Right ventricle myocardium superior (tissue), 1 donor: ENCODE measurements at regions of chr3 and their contacts with region 1.

Region 1: GRCh38 chr3:87167628-87168456 is 59.3 kb upstream of the CHMP2B start:
- DNase-seq: no peak
- ATAC-seq: no peak

Region 2: DNA sequence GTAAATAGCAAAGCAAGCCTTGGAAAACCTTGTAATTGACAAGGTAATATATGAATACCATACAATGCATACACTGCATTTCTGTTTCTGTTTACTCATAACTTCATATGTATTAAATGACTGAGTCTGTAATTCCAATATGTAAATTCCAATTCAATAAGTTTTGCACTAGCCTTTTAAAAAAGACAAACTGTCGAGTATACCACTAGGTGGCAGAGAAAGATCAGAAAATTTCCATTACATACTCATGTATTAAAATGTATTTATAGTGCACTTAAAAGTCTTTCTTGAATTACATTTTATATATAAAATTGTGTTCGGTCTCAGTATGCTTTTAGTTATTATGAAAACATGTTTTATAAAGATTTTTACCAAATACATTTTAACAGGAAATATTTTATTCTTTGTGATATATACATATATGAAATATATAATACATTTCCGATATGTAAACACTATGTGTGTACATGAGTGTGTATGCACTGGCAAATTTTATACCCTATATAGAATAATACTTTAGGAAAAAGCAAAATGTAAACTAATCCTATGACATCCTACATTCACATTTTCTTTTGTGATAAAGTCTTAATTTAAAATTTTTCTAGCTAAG is 393.7 kb before region 1 on chr3:
- intact Hi-C with region 1: loop called (anchors 5 kb)
- DNase-seq: no peak
- ATAC-seq: no peak